IMR-90 (cell line): ENCODE measurements at regions of chr1 and their contacts with region 1.

Region 1: DNA sequence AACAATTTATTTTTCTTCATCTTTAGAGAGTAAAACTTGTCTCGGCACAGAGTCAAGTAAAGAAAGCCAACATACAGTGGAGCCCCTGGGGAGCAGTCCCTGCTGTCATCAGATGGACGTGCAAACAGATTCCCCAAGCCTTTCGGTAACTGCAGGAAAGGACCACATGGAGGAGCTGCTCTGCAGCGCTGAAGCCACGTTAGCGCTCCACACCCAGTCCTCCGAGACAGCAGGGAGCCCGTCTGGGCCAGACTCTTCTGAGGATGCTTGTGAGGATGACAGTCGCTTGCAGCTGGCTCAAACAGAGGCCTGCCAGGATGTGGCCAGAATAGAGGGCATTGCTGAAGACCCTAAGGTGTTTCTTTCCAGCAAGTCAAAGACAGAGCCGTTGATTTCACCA is 77.1 kb upstream of the SCCPDH start:
- DNase-seq: peak; percentile 71
- ATAC-seq: peak; percentile 97
- H3K4me3 ChIP-seq: no peak overlapping the region
- H3K27ac ChIP-seq: peak overlapping the region; percentile 0; the same call in 1 of the 2 replicates
- H3K4me1 ChIP-seq: peaks cover 4% of the 10 kb centered on the region
- H3K27me3 ChIP-seq: no peaks in the 10 kb centered on the region
- CTCF ChIP-seq: peak; percentile 57
- POLR2A ChIP-seq: no peak
- RAD21 ChIP-seq: peak; percentile 67

Region 2: GRCh38 chr1:246753670-246754535 is 106.8 kb after region 1 on chr1:
- CTCF ChIA-PET with region 1: no interaction called
- POLR2A ChIA-PET with region 1: no interaction called
- dilution Hi-C with region 1: no loop called
- in situ Hi-C with region 1: no loop called
- intact Hi-C with region 1: loop called (anchors 2 kb)
- DNase-seq: peak; percentile 68
- ATAC-seq: peak; percentile 100
- H3K4me3 ChIP-seq: no peak overlapping the region
- H3K27ac ChIP-seq: no peak overlapping the region
- H3K4me1 ChIP-seq: no peaks in the 10 kb centered on the region
- H3K27me3 ChIP-seq: no peaks in the 10 kb centered on the region
- CTCF ChIP-seq: peak; percentile 83
- POLR2A ChIP-seq: no peak
- RAD21 ChIP-seq: peak; percentile 90